OCI-LY7 (cell line): ENCODE measurements at regions of chr1 and their contacts with region 1.

Region 1: GRCh38 chr1:92960395-92961130 is 699 bp downstream of the DIPK1A start:
- DNase-seq: peak; percentile 90
- H3K4me3 ChIP-seq: peak overlapping the region; percentile 93
- H3K27ac ChIP-seq: peak overlapping the region; percentile 92
- H3K4me1 ChIP-seq: peaks cover 73% of the 10 kb centered on the region
- CTCF ChIP-seq: peak; percentile 91

Region 2: GRCh38 chr1:92701147-92701546 is 259.4 kb before region 1 on chr1:
- CTCF ChIA-PET with region 1: no interaction called
- POLR2A ChIA-PET with region 1: no interaction called
- intact Hi-C with region 1: no loop called
- DNase-seq: no peak
- H3K4me3 ChIP-seq: no peak overlapping the region
- H3K27ac ChIP-seq: no peak overlapping the region
- H3K4me1 ChIP-seq: no peaks in the 10 kb centered on the region
- CTCF ChIP-seq: no peak

Region 3: DNA sequence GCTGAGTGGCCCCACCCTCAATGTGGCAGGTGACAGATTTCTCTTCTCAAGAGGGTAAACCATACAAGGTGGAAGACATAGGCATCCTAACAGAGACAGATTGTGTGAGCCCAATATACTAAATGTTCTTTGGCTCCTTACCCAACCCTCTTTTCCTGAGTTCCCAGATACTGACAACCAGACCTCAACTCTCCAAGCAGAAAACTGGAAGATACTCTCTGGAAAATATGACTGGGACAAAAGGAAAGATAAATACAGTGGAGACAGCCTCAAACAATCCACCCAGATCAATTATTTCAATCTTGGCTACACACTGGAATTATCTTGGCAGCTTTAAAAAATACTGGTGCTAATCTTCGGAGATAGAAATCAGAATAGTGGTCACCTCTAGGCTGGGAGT is 182.2 kb before region 1 on chr1:
- CTCF ChIA-PET with region 1: no interaction called
- POLR2A ChIA-PET with region 1: no interaction called
- intact Hi-C with region 1: no loop called
- DNase-seq: no peak
- H3K4me3 ChIP-seq: no peak overlapping the region
- H3K27ac ChIP-seq: no peak overlapping the region
- H3K4me1 ChIP-seq: peaks cover under 1% of the 10 kb centered on the region
- CTCF ChIP-seq: no peak

Region 4: GRCh38 chr1:92901699-92902405 is 58.7 kb before region 1 on chr1:
- CTCF ChIA-PET with region 1: no interaction called
- POLR2A ChIA-PET with region 1: interaction called, 8 read pairs
- intact Hi-C with region 1: loop called (anchors 2 kb)
- DNase-seq: no peak
- H3K4me3 ChIP-seq: no peak overlapping the region
- H3K27ac ChIP-seq: peak overlapping the region; percentile 18
- H3K4me1 ChIP-seq: peaks cover 53% of the 10 kb centered on the region
- CTCF ChIP-seq: no peak

Region 5: DNA sequence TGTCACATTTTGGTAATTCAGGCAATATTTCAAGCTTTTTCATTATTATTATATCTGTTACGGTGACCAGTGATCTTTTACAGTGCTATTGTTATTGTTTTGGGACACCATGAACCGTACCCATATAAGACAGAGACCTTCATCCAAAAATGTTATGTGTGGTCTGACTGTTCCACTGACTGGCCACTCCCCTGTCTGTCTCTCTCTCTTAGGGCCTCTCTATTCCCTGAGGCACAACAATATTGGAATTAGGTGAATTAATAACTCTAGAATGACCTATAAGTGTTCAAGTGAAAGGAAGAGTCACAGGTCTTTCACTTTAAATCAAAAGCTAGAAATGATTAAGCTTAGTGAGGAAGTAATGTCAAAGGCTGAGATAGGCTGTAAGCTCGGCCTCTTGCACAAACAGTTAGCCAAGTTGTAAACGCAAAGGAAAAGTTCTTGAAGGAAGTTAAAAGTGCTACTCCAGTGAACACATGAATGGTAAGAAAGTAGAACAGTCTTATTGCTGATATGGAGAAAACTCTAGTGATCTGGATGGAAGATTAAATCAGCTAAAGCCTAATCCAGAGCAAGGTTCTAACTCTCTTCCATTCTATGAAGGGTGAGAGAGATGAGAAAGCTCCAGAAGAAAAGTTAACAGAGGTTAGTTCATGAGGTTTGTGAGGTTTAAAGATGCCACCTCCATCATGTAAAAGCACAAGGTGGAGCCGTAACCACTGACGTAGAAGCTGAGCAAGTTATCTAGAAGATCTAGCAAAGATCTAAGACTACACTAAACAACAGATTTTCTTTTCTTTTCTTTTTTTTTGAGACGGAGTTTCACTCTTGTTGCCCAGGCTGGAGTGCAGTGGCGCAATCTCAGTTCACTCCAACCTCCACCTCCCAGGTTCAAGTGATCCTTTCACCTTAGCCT is 20.4 kb after region 1 on chr1:
- CTCF ChIA-PET with region 1: interaction called, 10 read pairs
- POLR2A ChIA-PET with region 1: interaction called, 118 read pairs
- intact Hi-C with region 1: no loop called
- DNase-seq: peak; percentile 37
- H3K4me3 ChIP-seq: no peak overlapping the region
- H3K27ac ChIP-seq: peak overlapping the region; percentile 32
- H3K4me1 ChIP-seq: peaks cover 56% of the 10 kb centered on the region
- CTCF ChIP-seq: no peak

Region 6: GRCh38 chr1:93148001-93148400 is 187.4 kb after region 1 on chr1:
- CTCF ChIA-PET with region 1: no interaction called
- POLR2A ChIA-PET with region 1: no interaction called
- intact Hi-C with region 1: no loop called
- DNase-seq: no peak
- H3K4me3 ChIP-seq: no peak overlapping the region
- H3K27ac ChIP-seq: no peak overlapping the region
- H3K4me1 ChIP-seq: no peaks in the 10 kb centered on the region
- CTCF ChIP-seq: no peak

Region 7: GRCh38 chr1:93179886-93180722 is 219.5 kb after region 1 on chr1 and contains the start of gene TMED5:
- CTCF ChIA-PET with region 1: no interaction called
- POLR2A ChIA-PET with region 1: no interaction called
- intact Hi-C with region 1: loop called (anchors 5 kb)
- DNase-seq: peak; percentile 98
- H3K4me3 ChIP-seq: peak within 1 kb of the TSS; percentile 79
- H3K27ac ChIP-seq: peak within 1 kb of the TSS; percentile 90
- H3K4me1 ChIP-seq: peaks cover 50% of the 10 kb centered on the region
- CTCF ChIP-seq: no peak
- total RNA-seq, gene TMED5: 40.3 and 43.1 TPM in 2 replicates